ENCODE measurements at regions of chr2 and their contacts with region 1.

Region 1: DNA sequence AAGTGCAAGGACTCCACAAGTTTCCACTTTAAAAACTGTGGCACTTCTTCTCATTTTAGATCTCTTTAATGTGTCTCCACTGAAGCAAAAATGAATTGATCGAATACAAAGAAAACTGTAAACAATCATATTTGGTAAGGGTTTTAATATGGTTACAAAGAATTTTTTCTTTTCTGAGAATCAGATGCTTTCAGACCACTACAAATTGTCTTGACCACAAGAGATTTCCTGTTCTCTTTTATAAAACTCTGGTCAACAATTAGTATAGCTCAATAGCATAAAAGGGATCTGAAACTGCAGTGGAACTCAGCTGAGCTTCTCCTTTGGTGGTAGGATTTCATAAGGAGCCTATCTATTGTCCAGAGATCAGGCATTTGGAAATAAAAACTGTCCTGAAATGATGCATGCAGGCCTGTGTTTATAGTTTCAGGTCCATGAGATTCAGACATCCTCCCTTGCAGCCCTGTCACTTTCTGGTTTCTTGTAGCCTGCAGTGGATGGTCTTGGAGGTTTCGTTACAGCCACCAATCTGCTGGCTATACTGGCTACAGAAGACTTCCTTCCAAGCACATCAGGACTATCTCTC is 120.0 kb downstream of the DOCK10 start:
- DNase-seq: no peak
- H3K4me3 ChIP-seq: no peak overlapping the region
- H3K27ac ChIP-seq: peak overlapping the region in 1 of 2 donors; percentile 23
- H3K4me1 ChIP-seq: no peaks in the 10 kb centered on the region
- H3K27me3 ChIP-seq: no peaks in the 10 kb centered on the region
- CTCF ChIP-seq: no peak
- POLR2A ChIP-seq: no peak

Region 2: GRCh38 chr2:224850081-224850480 is 72.2 kb before region 1 on chr2:
- intact Hi-C with region 1: loop called (anchors 2 kb)
- DNase-seq: no peak
- H3K4me3 ChIP-seq: no peak overlapping the region
- H3K27ac ChIP-seq: peak overlapping the region in 1 of 2 donors; percentile 21
- H3K4me1 ChIP-seq: no peaks in the 10 kb centered on the region
- H3K27me3 ChIP-seq: no peaks in the 10 kb centered on the region
- CTCF ChIP-seq: no peak
- POLR2A ChIP-seq: no peak

Region 3: GRCh38 chr2:225244949-225245348 is 322.7 kb after region 1 on chr2:
- intact Hi-C with region 1: loop called (anchors 5 kb)
- DNase-seq: no peak
- H3K4me3 ChIP-seq: no peak overlapping the region
- H3K27ac ChIP-seq: no peak overlapping the region
- H3K4me1 ChIP-seq: no peaks in the 10 kb centered on the region
- H3K27me3 ChIP-seq: no peaks in the 10 kb centered on the region
- CTCF ChIP-seq: no peak
- POLR2A ChIP-seq: no peak